ENCODE measurements at regions of chr10 and their contacts with region 1.

Region 1: DNA sequence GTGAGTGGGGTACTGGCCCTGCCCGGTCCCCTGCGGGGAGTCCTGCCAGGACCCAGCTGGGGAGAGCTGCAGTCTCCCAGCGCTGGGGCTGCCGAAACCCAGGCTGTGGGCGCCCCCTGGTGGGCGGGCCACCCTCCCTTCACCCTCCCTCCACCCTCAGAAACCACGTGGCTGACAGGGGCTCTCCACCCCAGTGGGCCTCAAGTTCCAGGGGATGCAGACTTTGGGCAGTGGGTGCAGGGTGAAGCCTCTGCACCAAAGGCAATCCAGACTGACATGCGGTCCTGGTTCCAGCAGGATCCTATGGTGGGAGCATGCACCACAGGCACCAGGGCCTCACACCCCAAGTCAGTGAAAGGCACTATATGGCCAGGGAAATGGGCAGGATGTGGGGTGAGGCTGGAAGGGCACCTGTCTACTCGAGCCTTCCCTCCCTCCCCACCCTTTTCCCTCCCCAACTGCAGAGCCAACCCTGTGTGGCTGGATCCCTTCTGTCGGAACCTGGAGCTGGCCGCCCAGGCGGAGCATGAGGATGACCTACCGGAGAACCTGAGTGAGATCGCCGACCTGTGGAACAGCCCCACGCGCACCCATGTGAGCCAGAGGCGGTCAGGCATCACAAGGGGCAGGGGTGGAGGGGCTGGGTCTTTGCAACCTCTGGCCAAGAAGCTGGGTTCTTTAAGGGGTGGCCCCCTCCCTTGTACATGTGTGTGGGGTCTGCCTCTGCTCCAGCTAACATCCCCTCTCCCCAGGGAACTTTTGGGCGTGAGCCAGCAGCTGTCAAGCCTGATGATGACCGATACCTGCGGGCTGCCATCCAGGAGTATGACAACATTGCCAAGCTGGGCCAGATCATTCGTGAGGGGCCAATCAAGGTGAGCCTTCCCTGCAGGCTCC is 38.8 kb downstream of the PSAP start:
- DNase-seq: peak; percentile 71 to 90 (median 89)
- ATAC-seq: peak; percentile 72 to 81
- H3K4me3 ChIP-seq: no peak overlapping the region
- H3K27ac ChIP-seq: no peak overlapping the region
- H3K4me1 ChIP-seq: peaks cover 2% of the 10 kb centered on the region
- H3K27me3 ChIP-seq: no peaks in the 10 kb centered on the region

Region 2: GRCh38 chr10:71314028-71314693 is 498.1 kb before region 1 on chr10:
- intact Hi-C with region 1: loop called in 2 of 4 experiments (anchors 5 to 10 kb)
- DNase-seq: peak; percentile 71 to 81 (median 75)
- ATAC-seq: peak; percentile 73 to 76
- H3K4me3 ChIP-seq: no peak overlapping the region
- H3K27ac ChIP-seq: no peak overlapping the region
- H3K4me1 ChIP-seq: no peaks in the 10 kb centered on the region
- H3K27me3 ChIP-seq: no peaks in the 10 kb centered on the region